Astrocyte of the cerebellum (primary cell): ENCODE measurements at regions of chr2 and their contacts with region 1.

Region 1: DNA sequence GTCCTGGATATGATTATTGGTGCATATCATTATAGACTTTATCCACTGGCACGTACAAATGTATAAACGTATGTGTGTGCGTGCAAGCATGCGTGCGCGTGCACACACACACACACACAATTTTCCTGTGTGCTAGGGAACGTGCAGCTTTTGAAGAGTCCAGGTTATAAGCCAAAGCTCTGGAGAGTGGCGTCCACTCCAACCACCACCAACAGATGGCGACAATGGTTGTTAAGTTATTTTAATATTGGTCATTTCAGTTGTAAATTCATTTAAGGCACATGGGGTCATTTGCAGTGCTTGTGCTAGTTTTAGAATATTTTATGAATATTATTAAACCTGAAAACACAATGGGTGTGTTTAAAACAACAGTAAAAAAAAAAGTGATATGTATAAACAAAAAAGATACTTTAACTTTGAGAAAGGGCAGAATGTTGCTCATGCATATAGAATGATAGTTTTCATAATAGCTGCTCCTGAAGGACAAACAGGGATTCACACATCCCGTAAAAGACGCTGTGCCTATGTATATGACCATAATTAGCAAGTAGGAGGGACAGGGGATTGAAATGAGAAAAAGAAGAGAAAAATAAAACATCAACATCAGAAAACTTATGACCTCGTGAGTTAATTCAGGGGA is 124.2 kb upstream of the ITGB6 start:
- DNase-seq: peak; percentile 37
- H3K4me3 ChIP-seq: no peak overlapping the region
- CTCF ChIP-seq: peak; percentile 80

Region 2: DNA sequence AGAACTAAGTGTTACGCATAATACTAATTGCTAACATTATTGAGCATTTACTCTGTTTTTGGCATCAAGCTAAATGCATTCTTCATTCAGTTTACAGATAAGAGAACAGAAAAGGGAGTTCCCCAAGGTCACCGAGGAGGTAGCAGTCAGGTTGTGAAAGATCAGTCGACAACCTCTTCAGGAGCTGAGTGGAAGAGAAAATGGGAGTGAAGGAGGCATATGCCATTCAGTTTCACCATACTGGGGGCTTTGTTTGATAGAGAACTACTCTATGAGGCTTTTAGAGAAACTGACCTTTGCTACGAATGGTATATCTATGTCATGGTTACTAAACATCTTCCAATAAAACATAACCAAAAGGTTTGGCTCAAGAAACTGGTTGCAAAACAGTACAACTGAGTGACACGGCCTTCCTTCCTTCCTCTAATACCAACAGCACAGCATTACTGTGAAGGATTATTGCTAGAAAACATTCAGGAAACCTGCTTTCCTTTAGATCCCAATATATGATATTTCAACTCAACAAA is 57.2 kb after region 1 on chr2:
- in situ Hi-C with region 1: loop called (anchors 5 kb)
- DNase-seq: no peak
- H3K4me3 ChIP-seq: no peak overlapping the region
- CTCF ChIP-seq: no peak